Psoas muscle (tissue), 8 donors: ENCODE measurements at regions of chr3 and their contacts with region 1.

Region 1: DNA sequence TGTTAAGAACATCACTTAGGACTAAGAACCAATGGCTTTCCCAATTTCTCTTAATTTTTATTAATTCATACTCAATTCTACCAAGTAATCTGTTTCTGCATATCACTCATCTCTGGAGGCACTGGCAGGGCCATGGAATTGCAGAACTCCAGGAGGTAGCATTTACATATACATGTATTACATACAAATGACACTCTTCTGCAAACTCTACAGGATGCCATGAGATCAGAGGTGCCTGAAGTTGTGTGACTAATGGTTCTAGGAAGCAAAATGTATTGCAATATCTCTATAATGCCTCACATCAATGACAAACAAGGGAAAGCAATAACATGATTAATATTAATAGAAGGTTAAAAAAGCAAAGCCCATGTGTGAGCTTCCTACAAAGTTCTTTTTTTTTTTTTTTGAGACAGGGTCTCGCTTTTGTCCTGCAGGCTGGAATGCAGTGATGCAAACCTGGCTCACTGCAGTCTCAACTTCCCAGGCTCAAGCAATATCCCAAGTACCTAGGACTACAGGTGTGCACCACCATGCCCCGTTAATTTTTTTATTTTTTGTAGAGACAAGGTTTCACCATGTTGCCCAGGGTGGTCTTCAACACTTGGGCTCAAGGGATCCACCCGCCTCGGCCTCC is 33.0 kb downstream of the DENND6A start:
- DNase-seq: no peak
- ATAC-seq: no peak
- H3K4me3 ChIP-seq: no peak overlapping the region
- H3K27ac ChIP-seq: no peak overlapping the region
- H3K4me1 ChIP-seq: no peaks in the 10 kb centered on the region
- H3K27me3 ChIP-seq: no peaks in the 10 kb centered on the region
- CTCF ChIP-seq: no peak

Region 2: DNA sequence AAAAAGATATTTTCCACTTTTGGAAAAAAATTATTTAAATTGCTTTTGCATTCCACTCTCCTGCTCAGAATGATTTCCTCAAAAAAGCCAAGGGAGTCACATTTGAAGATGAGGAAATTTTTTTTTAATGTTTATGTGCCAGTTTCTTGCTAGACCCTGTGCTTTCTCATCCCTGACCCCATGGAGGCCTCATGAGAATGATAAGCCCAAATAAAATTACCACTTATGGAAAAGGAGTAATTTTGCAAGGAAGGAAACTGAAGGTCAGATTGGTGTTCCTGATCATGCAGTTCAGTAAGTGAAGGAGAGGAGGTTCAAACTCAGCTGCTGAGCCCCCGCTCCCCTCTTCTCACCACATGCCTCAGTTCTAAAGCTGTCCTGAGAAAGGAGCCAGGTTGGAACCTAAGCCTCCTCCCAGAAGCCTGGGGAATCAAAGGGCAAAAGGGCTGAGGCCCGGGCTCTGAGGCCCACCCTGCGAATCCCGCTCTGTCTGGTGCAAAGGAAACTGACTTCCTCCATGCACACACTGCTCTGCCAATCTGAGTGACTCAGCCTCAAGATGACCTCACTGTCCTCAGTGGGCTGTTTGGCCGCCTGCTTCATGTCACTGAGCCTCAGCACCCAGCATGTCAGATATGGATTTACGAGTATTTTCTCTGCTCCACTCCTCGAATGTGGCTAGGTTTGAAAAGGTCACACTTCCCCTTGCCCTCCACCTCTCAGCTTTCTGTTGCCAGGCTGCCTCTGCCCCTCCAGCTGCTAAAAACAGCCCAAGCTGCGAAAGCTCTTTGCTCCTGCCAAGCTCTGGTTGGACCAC is 291.4 kb after region 1 on chr3:
- intact Hi-C with region 1: no loop called
- DNase-seq: peak; percentile 68 to 79
- ATAC-seq: peak; percentile 92 to 96 (median 94)
- H3K4me3 ChIP-seq: peak overlapping the region; percentile 3
- H3K27ac ChIP-seq: peak overlapping the region; percentile 78
- H3K4me1 ChIP-seq: peaks cover 21% of the 10 kb centered on the region
- H3K27me3 ChIP-seq: no peaks in the 10 kb centered on the region
- CTCF ChIP-seq: no peak

Region 3: GRCh38 chr3:58008140-58009025 is 348.5 kb after region 1 on chr3 and contains the start of gene FLNB:
- intact Hi-C with region 1: no loop called
- DNase-seq: peak; percentile 61 to 76
- ATAC-seq: peak; percentile 68 to 85 (median 74)
- H3K4me3 ChIP-seq: peak within 1 kb of the TSS; percentile 81
- H3K27ac ChIP-seq: peak within 1 kb of the TSS; percentile 38
- H3K4me1 ChIP-seq: peaks cover 5% of the 10 kb centered on the region
- H3K27me3 ChIP-seq: peaks cover 0 to 15% (median 4%) of the 10 kb centered on the region in 3 donors
- CTCF ChIP-seq: peak; percentile 47
- total RNA-seq, gene FLNB: 11.6 to 17.9 (median 15.4) TPM

Region 4: GRCh38 chr3:58237238-58237940 is 577.5 kb after region 1 on chr3 and contains the start of gene ABHD6:
- intact Hi-C with region 1: loop called in 1 of 2 experiments (anchors 10 kb)
- DNase-seq: peak; percentile 79 to 88
- ATAC-seq: peak; percentile 90 to 94 (median 94)
- H3K4me3 ChIP-seq: peak within 1 kb of the TSS; percentile 92
- H3K27ac ChIP-seq: peak within 1 kb of the TSS; percentile 74
- H3K4me1 ChIP-seq: peaks cover 14% of the 10 kb centered on the region
- H3K27me3 ChIP-seq: no peaks in the 10 kb centered on the region
- CTCF ChIP-seq: no peak
- total RNA-seq, gene ABHD6: 2.0 to 7.2 (median 5.1) TPM